ENCODE measurements at regions of chr1 and their contacts with region 1.

Region 1: DNA sequence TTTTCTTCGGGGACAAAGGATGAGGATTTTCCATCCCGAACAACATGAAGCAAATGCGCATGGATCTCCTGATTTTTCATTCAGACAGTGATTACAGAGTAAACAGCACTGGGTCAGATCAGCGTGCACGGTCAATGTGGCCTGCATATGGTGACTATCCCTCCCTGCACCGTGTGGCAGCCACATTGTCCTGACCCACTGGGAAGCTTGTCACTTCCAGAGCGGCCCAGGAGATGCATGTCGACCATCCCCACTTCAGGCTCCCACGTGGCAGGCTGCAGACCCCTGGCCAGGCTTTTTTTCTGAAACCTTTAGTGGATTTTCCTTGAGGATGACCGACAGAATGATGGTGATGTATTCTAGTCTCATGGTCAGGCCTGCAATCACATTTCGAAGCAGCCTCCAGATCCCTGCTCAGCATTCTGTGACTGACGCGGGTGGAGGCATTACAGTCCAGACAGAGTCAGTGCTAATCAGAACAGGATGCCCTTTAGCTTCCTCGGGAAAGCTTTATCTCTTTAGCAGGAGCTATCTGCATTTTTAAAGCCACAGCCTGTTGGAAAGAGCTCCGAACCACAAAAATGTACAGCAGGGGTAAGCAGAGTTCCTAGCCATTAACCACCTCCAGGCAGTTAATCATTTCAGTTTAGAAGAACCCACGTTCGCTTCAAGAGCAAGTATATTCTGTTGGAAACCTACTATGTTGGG is 56.7 kb downstream of the IRF2BP2 start:
- DNase-seq: peak in 2 of 5 donors; percentile 45 to 71
- ATAC-seq: peak; percentile 63 to 93 (median 90)
- H3K4me3 ChIP-seq: no peak overlapping the region
- H3K27ac ChIP-seq: peak overlapping the region in 11 of 12 donors; percentile 17 to 85 (median 68)
- H3K4me1 ChIP-seq: peaks cover 0 to 25% (median 19%) of the 10 kb centered on the region in 12 donors
- H3K27me3 ChIP-seq: no peaks in the 10 kb centered on the region
- CTCF ChIP-seq: no peak
- POLR2A ChIP-seq: no peak

Region 2: GRCh38 chr1:234589854-234590620 is 36.7 kb after region 1 on chr1:
- intact Hi-C with region 1: loop called in 2 of 10 experiments (anchors 5 kb)
- DNase-seq: peak in 3 of 5 donors; percentile 42 to 54 (median 45)
- ATAC-seq: peak; percentile 67 to 86 (median 76)
- H3K4me3 ChIP-seq: no peak overlapping the region
- H3K27ac ChIP-seq: peak overlapping the region in 10 of 12 donors; percentile 19 to 79 (median 54)
- H3K4me1 ChIP-seq: peaks cover 0 to 39% (median 18%) of the 10 kb centered on the region in 12 donors
- H3K27me3 ChIP-seq: no peaks in the 10 kb centered on the region
- CTCF ChIP-seq: no peak
- POLR2A ChIP-seq: no peak

Region 3: GRCh38 chr1:234778221-234779159 is 225.2 kb after region 1 on chr1:
- intact Hi-C with region 1: no loop called
- DNase-seq: peak in 3 of 5 donors; percentile 39 to 46 (median 44)
- ATAC-seq: peak in 3 of 4 donors; percentile 2 to 19 (median 6)
- H3K4me3 ChIP-seq: peak overlapping the region in 1 of 12 donors; percentile 9
- H3K27ac ChIP-seq: peak overlapping the region in 1 of 12 donors; percentile 23
- H3K4me1 ChIP-seq: peaks cover 0 to 37% (median 0%) of the 10 kb centered on the region in 12 donors
- H3K27me3 ChIP-seq: peaks cover 0 to 71% (median 25%) of the 10 kb centered on the region in 9 donors
- CTCF ChIP-seq: no peak
- POLR2A ChIP-seq: peak in 1 of 2 donors; percentile 3